ENCODE measurements at regions of chr10 and their contacts with region 1.

Region 1: DNA sequence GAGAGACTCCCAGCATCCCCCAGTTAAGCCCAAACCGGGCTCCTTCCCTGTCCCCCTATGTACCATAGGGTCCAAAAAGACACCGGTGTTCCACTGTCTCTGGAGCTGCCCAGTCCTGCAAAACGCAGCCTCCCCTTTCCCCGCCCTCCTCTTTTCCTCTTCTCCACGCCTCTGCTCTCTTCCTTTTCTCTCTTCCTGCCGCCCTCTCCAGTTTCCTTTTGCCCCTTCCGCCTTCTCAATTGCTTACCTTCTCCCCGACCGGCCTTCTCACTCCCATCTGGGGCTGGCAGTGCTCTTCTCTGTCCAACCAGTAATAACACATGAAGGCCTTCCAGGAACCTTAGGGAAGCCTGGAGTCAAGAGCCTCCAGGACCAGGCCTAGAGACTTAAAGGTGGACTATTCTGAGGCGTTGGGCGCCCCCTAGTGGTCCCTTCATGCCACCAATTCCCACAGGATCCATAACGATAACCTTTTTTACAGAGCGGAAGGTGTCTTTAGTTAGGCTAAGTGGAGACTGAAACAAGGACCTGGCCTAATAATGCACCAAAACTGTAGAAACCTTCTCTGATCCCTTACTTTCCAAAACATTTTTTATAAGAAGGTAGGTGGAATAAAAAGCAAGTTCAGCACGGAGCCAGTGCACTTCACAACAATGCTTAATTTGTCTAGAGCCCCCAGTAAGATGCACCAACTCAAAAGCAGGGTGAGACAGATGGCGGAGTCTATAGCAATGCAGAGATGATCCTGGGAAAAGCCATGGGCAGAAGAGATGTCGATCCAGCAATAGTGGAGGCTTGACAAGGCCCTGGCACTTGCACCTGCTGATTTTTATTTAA is 27.2 kb upstream of the MSRB2 start:
- DNase-seq: peak; percentile 63 to 89 (median 80)
- H3K4me3 ChIP-seq: no peak overlapping the region
- H3K27ac ChIP-seq: peak overlapping the region in 23 of 59 donors; percentile 2 to 79 (median 40)
- H3K27me3 ChIP-seq: no peaks in the 10 kb centered on the region
- CTCF ChIP-seq: peak; percentile 65 to 96 (median 85)

Region 2: DNA sequence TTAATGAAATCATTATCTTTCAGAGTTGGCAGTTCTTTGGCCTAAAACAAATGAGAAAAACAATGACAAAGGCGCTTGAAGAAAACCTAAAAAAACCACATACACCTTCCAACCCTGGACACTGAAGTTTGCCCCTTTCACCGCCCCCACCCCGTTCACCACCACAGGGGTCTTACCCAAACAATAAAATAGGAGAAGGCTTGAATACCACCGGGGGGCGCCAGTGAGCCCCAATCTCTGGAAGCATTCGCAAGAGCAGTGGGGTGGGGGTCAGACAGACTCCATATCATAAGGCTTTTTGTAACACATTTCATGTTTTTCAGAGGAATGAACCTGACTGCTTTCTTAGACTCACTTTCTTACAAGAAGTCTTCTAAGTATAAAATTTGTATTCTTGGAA is 517.4 kb before region 1 on chr10:
- intact Hi-C with region 1: loop called in 1 of 2 experiments (anchors 10 kb)
- DNase-seq: peak in 5 of 10 donors; percentile 8 to 58 (median 54)
- H3K4me3 ChIP-seq: no peak overlapping the region
- H3K27ac ChIP-seq: peak overlapping the region in 26 of 59 donors; percentile 1 to 93 (median 38)
- H3K27me3 ChIP-seq: no peaks in the 10 kb centered on the region
- CTCF ChIP-seq: peak in 55 of 56 donors; percentile 30 to 71 (median 55)

Region 3: DNA sequence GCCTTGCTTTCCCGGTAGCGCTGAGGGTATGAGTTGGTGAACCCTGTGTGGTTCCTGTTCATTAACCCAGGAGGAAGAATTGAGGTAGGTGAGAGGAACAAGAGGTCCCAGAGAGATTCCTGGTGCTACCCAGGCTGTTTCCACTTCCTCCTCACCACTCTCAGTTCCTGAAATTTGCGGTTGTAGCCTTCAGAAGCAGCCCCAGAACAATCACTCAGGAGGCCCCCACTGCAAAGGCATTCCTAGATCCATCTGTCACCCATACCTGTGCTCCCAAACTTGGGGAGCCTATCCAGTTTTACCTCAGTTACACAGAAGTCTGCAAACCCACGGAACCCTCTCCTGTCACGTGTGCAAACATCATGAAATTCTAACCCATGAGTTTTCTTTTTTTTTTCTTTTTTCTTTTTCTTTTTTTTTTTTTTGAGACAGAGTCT is 344.8 kb before region 1 on chr10:
- intact Hi-C with region 1: loop called in 1 of 2 experiments (anchors 10 kb)
- DNase-seq: no peak
- H3K4me3 ChIP-seq: no peak overlapping the region
- H3K27ac ChIP-seq: no peak overlapping the region
- H3K27me3 ChIP-seq: no peaks in the 10 kb centered on the region
- CTCF ChIP-seq: no peak

Region 4: GRCh38 chr10:22874189-22874854 is 193.8 kb before region 1 on chr10:
- intact Hi-C with region 1: loop called in 1 of 2 experiments (anchors 10 kb)
- DNase-seq: peak in 3 of 10 donors; percentile 44 to 62 (median 59)
- H3K4me3 ChIP-seq: no peak overlapping the region
- H3K27ac ChIP-seq: peak overlapping the region; percentile 53 to 98 (median 89)
- H3K27me3 ChIP-seq: no peaks in the 10 kb centered on the region
- CTCF ChIP-seq: peak in 2 of 56 donors; percentile 9 to 32

Region 5: GRCh38 chr10:22997102-22997501 is 71.1 kb before region 1 on chr10:
- intact Hi-C with region 1: loop called in 1 of 2 experiments (anchors 5 kb)
- DNase-seq: peak in 1 of 10 donors; percentile 24
- H3K4me3 ChIP-seq: no peak overlapping the region
- H3K27ac ChIP-seq: peak overlapping the region in 17 of 59 donors; percentile 1 to 63 (median 42)
- H3K27me3 ChIP-seq: no peaks in the 10 kb centered on the region
- CTCF ChIP-seq: peak in 1 of 56 donors; percentile 22

Measured in dorsolateral prefrontal cortex (tissue), 120 donors.